Caco-2 (cell line): ENCODE measurements at regions of chr17 and their contacts with region 1.

Region 1: GRCh38 chr17:82205719-82206508 is 6.7 kb downstream of the CCDC57 start:
- DNase-seq: peak; percentile 88 to 90
- H3K4me3 ChIP-seq: no peak overlapping the region
- H3K4me3 Mint-ChIP-seq: peak overlapping the region; percentile 63
- H3K27ac Mint-ChIP-seq: peak overlapping the region; percentile 96
- H3K4me1 ChIP-seq: peaks cover 15% of the 10 kb centered on the region
- H3K4me1 Mint-ChIP-seq: peaks cover 12% of the 10 kb centered on the region
- H3K27me3 ChIP-seq: no peaks in the 10 kb centered on the region
- H3K27me3 Mint-ChIP-seq: no peaks in the 10 kb centered on the region
- CTCF ChIP-seq: peak; percentile 90 to 96

Region 2: DNA sequence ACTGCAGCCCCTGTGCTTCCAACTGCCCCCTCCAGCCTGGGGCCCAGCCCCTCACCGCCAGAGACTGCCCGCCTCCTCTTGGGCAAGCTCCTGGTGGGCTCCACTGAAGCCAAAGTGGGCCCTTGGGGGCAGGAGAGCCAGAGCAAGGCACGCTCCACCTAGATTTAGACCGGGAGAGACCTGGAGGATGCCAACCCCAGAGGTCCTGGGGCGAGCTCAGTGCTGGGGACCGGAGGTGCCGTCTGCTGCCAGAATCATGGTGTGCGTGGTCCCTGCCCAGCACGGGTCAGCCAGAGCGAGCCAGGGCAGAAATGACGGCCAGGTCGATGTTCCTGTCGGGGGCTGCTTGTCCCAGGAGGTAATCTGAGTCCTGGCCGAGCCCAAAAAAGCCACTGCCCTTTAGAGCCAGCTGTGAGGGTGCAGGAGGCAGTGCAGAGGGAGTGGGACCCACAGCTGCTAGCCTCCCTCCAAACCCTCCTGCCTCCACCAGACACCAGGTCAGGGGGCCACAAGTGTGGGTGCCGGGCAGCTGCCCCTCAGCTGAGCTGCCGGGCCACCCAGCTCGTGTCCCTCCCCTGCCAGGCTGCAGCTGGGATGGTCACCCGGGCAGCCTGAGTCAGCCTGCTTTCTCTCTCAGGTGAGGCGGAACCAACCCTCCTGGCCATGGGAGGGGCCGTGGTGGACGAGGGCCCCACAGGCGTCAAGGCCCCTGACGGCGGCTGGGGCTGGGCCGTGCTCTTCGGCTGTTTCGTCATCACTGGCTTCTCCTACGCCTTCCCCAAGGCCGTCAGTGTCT is 29.6 kb after region 1 on chr17:
- CTCF ChIA-PET with region 1: interaction called, 4 read pairs
- POLR2A ChIA-PET with region 1: no interaction called
- intact Hi-C with region 1: loop called (anchors 2 kb)
- DNase-seq: no peak
- H3K4me3 ChIP-seq: no peak overlapping the region
- H3K4me3 Mint-ChIP-seq: no peak overlapping the region
- H3K27ac Mint-ChIP-seq: no peak overlapping the region
- H3K4me1 ChIP-seq: peaks cover 36% of the 10 kb centered on the region
- H3K4me1 Mint-ChIP-seq: no peaks in the 10 kb centered on the region
- H3K27me3 ChIP-seq: no peaks in the 10 kb centered on the region
- H3K27me3 Mint-ChIP-seq: no peaks in the 10 kb centered on the region
- CTCF ChIP-seq: no peak

Region 3: DNA sequence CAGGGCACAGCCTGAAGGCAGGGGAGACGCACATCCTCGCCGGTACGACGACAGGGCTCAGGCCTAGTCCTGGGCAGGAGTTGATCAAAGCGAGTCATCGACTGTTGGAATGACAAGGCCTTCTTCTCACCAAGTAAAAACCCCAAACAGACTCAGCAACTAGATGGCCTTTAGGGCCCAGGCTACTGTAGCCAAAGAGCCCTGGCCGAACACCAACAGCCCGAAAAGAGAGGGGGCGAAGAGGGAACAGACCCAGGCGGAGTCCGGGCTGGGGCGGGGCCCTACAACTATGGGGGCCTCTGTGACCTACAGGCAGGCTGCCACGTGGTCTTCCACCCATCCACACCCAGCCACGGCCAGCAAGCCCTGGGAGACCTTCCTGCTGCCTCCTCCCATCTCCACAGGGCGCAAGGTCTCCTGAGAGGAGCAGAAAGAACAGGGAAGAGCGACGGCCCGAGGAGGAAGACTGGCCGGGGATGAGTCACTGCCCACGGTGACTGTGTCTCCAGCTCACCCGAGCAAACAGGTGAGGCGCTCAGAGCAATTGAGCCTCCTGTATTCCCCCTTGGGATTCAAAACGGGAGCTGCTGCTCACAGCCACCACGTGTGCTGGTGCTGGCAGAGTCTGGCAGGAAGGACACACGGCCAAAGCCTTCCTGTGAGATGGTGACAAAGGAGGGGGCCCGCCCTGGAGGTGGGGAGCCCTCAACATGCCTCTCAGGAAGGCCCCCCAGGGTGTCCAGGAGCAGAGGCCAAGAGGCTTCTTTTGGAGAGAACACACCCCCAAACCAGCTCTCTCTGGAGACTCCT is 40.7 kb after region 1 on chr17:
- CTCF ChIA-PET with region 1: no interaction called
- POLR2A ChIA-PET with region 1: no interaction called
- intact Hi-C with region 1: no loop called
- DNase-seq: no peak
- H3K4me3 ChIP-seq: no peak overlapping the region
- H3K4me3 Mint-ChIP-seq: no peak overlapping the region
- H3K27ac Mint-ChIP-seq: no peak overlapping the region
- H3K4me1 ChIP-seq: no peaks in the 10 kb centered on the region
- H3K4me1 Mint-ChIP-seq: peaks cover 13% of the 10 kb centered on the region
- H3K27me3 ChIP-seq: no peaks in the 10 kb centered on the region
- H3K27me3 Mint-ChIP-seq: no peaks in the 10 kb centered on the region
- CTCF ChIP-seq: no peak

Region 4: DNA sequence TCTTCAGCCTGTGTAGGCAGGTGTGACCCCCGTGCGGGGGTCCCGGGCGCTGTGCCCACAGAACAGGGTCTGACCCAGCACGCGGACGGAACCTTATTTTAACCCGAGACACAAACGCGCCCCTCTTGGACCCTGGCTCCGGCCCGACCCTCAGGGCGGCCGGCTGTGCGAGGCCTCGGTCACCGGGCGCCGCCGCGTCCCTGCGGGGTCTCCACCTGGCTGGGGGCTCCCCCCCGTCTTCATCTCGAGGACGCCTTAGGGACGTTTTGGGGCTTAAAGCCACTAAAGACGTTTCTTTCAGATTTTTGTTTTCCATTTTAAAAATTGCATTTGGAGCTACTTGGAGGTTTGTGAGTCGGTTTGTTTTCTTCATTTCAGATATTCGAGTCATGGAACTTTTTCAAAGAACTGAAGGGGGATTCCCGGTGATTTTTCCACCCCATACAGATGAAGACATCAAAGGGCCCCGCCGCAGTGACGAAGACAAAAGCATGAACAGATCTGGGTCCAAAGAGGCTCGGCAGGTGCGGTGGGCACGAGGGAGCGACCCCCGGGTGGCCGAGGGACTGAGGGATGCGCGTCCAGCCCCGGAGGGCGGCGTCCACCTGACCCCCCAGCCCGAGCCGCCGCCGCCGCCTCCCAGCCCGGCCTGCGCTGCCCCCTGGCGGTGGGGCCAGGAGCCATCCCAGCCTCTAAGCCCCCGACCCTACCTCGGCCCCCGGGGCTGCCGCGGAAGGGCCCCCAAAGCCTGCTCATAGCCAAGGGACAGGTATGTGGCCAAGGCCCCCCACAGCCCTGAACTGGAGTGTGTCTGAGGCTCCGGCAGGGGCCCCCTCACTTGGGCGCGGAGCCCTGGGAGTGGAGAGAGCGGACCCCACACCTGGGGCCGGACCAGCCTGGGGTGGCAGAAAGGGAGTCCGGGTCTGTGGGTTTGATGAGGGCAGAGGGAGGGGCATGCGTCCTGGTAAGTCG is 115.3 kb after region 1 on chr17:
- CTCF ChIA-PET with region 1: no interaction called
- POLR2A ChIA-PET with region 1: no interaction called
- intact Hi-C with region 1: loop called (anchors 1 kb)
- DNase-seq: peak in 1 of 2 experiments; percentile 83
- H3K4me3 ChIP-seq: peak overlapping the region; percentile 48
- H3K4me3 Mint-ChIP-seq: peak overlapping the region; percentile 76
- H3K27ac Mint-ChIP-seq: no peak overlapping the region
- H3K4me1 ChIP-seq: peaks cover 17% of the 10 kb centered on the region
- H3K4me1 Mint-ChIP-seq: no peaks in the 10 kb centered on the region
- H3K27me3 ChIP-seq: no peaks in the 10 kb centered on the region
- H3K27me3 Mint-ChIP-seq: no peaks in the 10 kb centered on the region
- CTCF ChIP-seq: peak; percentile 65 to 96

Region 5: DNA sequence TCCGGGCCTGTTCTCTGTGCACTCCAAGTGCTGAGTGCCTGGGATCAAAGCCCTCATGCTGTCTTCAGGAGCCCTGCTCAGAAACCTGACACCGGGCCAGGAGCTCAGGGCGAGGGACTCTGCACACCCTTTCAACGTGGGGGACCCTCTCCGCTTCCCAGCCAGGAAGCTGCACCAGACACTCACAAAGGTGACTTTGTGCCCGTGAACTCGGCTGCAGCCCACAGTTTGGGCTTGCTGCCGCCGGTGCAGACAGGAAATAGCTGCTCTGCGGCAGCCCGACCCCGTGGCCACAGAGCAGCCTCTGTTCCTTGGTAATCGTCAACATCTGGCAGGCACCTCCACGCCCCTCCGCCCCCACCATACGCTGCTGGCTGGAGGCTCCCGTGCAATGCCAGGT is 780.1 kb after region 1 on chr17:
- CTCF ChIA-PET with region 1: no interaction called
- POLR2A ChIA-PET with region 1: no interaction called
- intact Hi-C with region 1: no loop called
- DNase-seq: no peak
- H3K4me3 ChIP-seq: no peak overlapping the region
- H3K4me3 Mint-ChIP-seq: no peak overlapping the region
- H3K27ac Mint-ChIP-seq: no peak overlapping the region
- H3K4me1 ChIP-seq: no peaks in the 10 kb centered on the region
- H3K4me1 Mint-ChIP-seq: no peaks in the 10 kb centered on the region
- H3K27me3 ChIP-seq: no peaks in the 10 kb centered on the region
- H3K27me3 Mint-ChIP-seq: no peaks in the 10 kb centered on the region
- CTCF ChIP-seq: no peak